Pancreas (tissue), 10 donors: ENCODE measurements at regions of chr2 and their contacts with region 1.

Region 1: GRCh38 chr2:234881413-234882241 is 70.2 kb upstream of the SH3BP4 start:
- DNase-seq: peak; percentile 88 to 96 (median 92)
- ATAC-seq: peak; percentile 81 to 89 (median 87)
- H3K4me3 ChIP-seq: peak overlapping the region in 1 of 4 donors; percentile 10
- H3K27ac ChIP-seq: peak overlapping the region in 3 of 4 donors; percentile 18 to 72 (median 66)
- H3K4me1 ChIP-seq: peaks cover 18 to 49% (median 34%) of the 10 kb centered on the region in 3 donors
- H3K27me3 ChIP-seq: no peaks in the 10 kb centered on the region
- CTCF ChIP-seq: peak; percentile 59 to 81 (median 80)

Region 2: GRCh38 chr2:235050992-235051351 is 169.3 kb after region 1 on chr2:
- intact Hi-C with region 1: loop called in 1 of 3 experiments (anchors 10 kb)
- DNase-seq: peak; percentile 91 to 99 (median 97)
- ATAC-seq: peak; percentile 61 to 73 (median 66)
- H3K4me3 ChIP-seq: no peak overlapping the region
- H3K27ac ChIP-seq: peak overlapping the region; percentile 87 to 94 (median 88)
- H3K4me1 ChIP-seq: peaks cover 54 to 80% (median 69%) of the 10 kb centered on the region in 3 donors
- H3K27me3 ChIP-seq: no peaks in the 10 kb centered on the region
- CTCF ChIP-seq: no peak

Region 3: DNA sequence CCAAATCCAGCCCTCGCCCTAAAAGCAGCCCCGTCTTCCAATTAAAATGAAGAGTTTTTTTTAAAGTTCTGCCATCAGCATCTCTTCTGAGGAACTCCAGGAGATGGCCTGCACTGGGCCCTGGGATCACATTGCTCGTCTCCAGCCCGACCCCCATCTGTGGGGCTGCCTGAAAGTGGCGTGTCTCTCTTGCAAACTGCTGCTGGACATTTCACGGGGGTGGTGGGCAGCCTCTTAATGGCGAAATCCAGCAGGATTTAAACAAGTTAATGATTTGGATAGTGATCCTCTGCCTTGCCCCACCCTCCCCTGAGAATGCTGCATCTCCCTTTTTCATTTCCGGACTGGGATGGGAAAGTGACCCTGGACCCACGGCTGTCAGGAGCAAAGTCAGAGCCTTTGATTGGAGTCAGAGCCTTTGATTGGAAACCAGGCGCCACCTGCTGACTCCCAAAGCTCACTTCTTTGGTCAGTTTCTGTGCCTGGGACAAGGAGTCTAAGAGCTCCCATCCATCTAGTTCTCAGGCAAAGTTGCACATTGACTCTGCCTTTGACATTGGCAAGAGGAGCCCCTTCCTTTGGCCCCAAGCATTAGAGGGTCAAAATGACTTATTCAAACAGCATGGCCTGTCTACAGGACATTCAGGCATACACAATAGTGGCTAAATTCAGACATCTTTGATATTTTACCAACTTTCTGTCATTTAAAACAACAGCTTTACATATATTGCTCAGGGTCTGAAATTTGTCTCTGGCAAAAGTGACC is 225.4 kb after region 1 on chr2:
- intact Hi-C with region 1: loop called in 1 of 3 experiments (anchors 5 kb)
- DNase-seq: peak in 5 of 6 donors; percentile 50 to 77 (median 56)
- ATAC-seq: peak; percentile 81 to 98 (median 92)
- H3K4me3 ChIP-seq: no peak overlapping the region
- H3K27ac ChIP-seq: no peak overlapping the region
- H3K4me1 ChIP-seq: no peaks in the 10 kb centered on the region
- H3K27me3 ChIP-seq: no peaks in the 10 kb centered on the region
- CTCF ChIP-seq: peak; percentile 28 to 50 (median 49)